Activated CD4-positive, alpha-beta memory T cell treated with anti-CD3 and anti-CD28 coated beads for 36 hours (primary cell): ENCODE measurements at regions of chrX and their contacts with region 1.

Region 1: GRCh38 chrX:153724252-153725040 is at the starts of genes ABCD1 and BCAP31:
- DNase-seq: peak; percentile 91
- H3K4me3 Mint-ChIP-seq: peak within 1 kb of the TSS; percentile 86
- H3K27ac Mint-ChIP-seq: peak within 1 kb of the TSS; percentile 88
- H3K4me1 Mint-ChIP-seq: peaks cover 24% of the 10 kb centered on the region
- H3K27me3 Mint-ChIP-seq: no peaks in the 10 kb centered on the region
- total RNA-seq, gene ABCD1: 4.8 TPM
- total RNA-seq, gene BCAP31: 119 to 121 TPM

Region 2: GRCh38 chrX:153635788-153636622 is 88.4 kb before region 1 on chrX:
- CTCF ChIA-PET with region 1: no interaction called
- POLR2A ChIA-PET with region 1: no interaction called
- intact Hi-C with region 1: no loop called
- DNase-seq: peak; percentile 35
- H3K4me3 Mint-ChIP-seq: no peak overlapping the region
- H3K27ac Mint-ChIP-seq: no peak overlapping the region
- H3K4me1 Mint-ChIP-seq: no peaks in the 10 kb centered on the region
- H3K27me3 Mint-ChIP-seq: peaks cover 2% of the 10 kb centered on the region

Region 3: GRCh38 chrX:153684467-153685155 is 39.8 kb before region 1 on chrX:
- CTCF ChIA-PET with region 1: no interaction called
- POLR2A ChIA-PET with region 1: no interaction called
- intact Hi-C with region 1: no loop called
- DNase-seq: no peak
- H3K4me3 Mint-ChIP-seq: no peak overlapping the region
- H3K27ac Mint-ChIP-seq: no peak overlapping the region
- H3K4me1 Mint-ChIP-seq: no peaks in the 10 kb centered on the region
- H3K27me3 Mint-ChIP-seq: peaks cover 2% of the 10 kb centered on the region

Region 4: GRCh38 chrX:153794018-153794896 is 69.8 kb after region 1 on chrX and contains the starts of genes IDH3G and SSR4:
- CTCF ChIA-PET with region 1: no interaction called
- POLR2A ChIA-PET with region 1: interaction called, 3 read pairs
- intact Hi-C with region 1: loop called (anchors 10 kb)
- DNase-seq: peak; percentile 95
- H3K4me3 Mint-ChIP-seq: peak within 1 kb of the TSS; percentile 90
- H3K27ac Mint-ChIP-seq: peak within 1 kb of the TSS; percentile 80
- H3K4me1 Mint-ChIP-seq: peaks cover 18% of the 10 kb centered on the region
- H3K27me3 Mint-ChIP-seq: no peaks in the 10 kb centered on the region
- total RNA-seq, gene IDH3G: 45.9 to 51.5 TPM
- total RNA-seq, gene SSR4: 194 to 203 TPM